Transverse colon (tissue), 4 donors: ENCODE measurements at regions of chr11 and their contacts with region 1.

Region 1: DNA sequence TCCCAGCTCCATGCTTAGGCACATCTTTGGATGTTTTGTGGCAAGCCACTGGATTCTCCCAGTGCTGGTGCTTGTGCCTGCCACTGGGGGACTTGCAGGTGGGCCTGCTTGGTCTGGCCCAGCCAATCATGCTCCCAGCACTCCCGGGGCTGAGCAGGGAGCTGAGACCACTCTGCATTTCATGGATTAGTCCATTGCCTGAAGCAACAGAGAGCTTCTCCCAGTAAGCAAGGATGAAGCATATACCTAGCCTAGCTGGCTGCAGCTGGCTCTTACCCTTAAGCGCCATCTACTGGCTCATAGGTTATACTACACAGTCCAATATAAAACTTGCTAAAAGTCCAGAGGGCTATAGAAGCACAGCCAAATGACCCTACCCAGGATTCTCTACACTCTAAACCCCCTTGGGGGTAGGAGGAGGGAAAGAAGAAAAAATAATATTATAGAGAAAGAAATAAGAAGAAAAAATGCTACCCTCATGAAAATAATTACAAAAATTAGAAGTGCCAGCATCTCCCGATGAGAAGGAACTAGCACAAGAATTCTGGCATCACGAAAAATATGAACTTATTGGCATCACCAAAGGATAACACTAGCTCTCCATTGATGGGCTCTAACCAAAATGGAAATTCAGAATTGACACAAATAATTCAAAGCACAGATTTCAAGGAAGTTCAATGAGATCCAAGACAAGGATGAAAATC is 275.3 kb downstream of the C11orf87 start:
- DNase-seq: no peak
- H3K4me3 ChIP-seq: no peak overlapping the region
- H3K27ac ChIP-seq: no peak overlapping the region
- H3K4me1 ChIP-seq: no peaks in the 10 kb centered on the region
- H3K27me3 ChIP-seq: no peaks in the 10 kb centered on the region
- CTCF ChIP-seq: peak; percentile 25 to 58 (median 39)
- EP300 ChIP-seq: no peak
- POLR2A ChIP-seq: no peak

Region 2: GRCh38 chr11:108697872-108698473 is 999.3 kb before region 1 on chr11:
- in situ Hi-C with region 1: loop called in 2 of 4 experiments (anchors 25 kb)
- intact Hi-C with region 1: no loop called
- DNase-seq: peak; percentile 29
- H3K4me3 ChIP-seq: no peak overlapping the region
- H3K27ac ChIP-seq: no peak overlapping the region
- H3K4me1 ChIP-seq: no peaks in the 10 kb centered on the region
- H3K27me3 ChIP-seq: no peaks in the 10 kb centered on the region
- CTCF ChIP-seq: peak; percentile 68 to 81 (median 76)
- EP300 ChIP-seq: no peak
- POLR2A ChIP-seq: no peak